Activated T-helper 2 cell treated with anti-CD3 and anti-CD28 coated beads, Interferon-gamma antibody, Interleukin-2, Interleukin-4, amounts not matched to agents 10 μg/mL and 5 μg/mL and 100 μg/mL, durations not matched to agents 14 hours and 24 hours and 36 hours (primary cell): ENCODE measurements at regions of chr20 and their contacts with region 1.

Region 1: DNA sequence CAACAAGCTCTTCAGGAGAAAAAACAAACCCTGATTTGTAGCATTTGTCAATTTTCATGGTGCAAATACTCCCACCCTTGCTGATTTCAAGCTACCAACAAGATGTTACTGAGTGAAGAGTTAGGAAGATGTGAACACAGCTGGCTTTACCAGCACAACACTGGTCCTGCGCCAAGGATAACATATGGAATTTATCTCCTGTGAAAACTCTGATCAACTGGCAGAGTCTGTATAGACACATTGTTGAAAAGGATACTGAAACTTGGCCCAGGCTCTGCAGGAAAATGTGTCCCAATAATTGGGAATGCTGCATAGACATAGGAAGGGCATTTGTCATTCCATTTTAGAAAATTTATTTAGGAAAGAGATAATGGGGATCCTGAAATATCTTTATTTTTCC is 29.0 kb downstream of the OTOR start:
- DNase-seq: no peak
- H3K4me3 Mint-ChIP-seq: no peak overlapping the region
- H3K27ac Mint-ChIP-seq: no peak overlapping the region
- H3K4me1 Mint-ChIP-seq: no peaks in the 10 kb centered on the region
- H3K27me3 Mint-ChIP-seq: peaks cover 3% of the 10 kb centered on the region

Region 2: DNA sequence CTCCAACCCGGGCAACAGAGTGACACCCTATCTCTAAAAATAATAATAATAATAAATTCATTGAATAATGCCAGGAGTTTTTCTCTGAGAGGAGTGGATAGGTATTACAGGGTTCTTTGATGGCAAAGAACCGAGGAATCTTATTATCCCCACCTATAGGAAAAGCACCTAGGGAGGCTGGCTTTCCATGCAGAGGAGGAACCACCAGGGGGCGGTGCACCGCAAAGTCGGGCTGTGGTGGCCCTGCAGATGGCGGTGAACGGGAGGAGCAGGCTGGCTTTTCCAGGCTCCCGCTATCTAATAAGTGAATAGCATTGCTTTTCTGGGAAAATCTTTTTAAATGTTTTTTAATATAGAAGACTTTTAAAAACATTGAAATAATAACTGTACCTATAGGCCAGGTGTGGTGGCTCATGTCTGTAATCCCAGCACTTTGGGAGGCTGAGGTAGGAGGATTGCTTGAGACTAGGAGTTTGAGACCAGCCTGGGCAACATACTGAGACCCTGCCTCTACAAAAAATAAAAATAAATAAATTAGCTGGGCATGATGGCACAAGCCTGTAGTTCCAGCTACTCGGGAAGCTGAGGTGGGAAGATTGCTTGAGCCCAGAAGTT is 1068.0 kb before region 1 on chr20:
- intact Hi-C with region 1: loop called (anchors 10 kb)
- DNase-seq: peak; percentile 10
- H3K4me3 Mint-ChIP-seq: no peak overlapping the region
- H3K27ac Mint-ChIP-seq: no peak overlapping the region
- H3K4me1 Mint-ChIP-seq: no peaks in the 10 kb centered on the region
- H3K27me3 Mint-ChIP-seq: no peaks in the 10 kb centered on the region